MCF 10A (cell line): ENCODE measurements at regions of chr9 and their contacts with region 1.

Region 1: DNA sequence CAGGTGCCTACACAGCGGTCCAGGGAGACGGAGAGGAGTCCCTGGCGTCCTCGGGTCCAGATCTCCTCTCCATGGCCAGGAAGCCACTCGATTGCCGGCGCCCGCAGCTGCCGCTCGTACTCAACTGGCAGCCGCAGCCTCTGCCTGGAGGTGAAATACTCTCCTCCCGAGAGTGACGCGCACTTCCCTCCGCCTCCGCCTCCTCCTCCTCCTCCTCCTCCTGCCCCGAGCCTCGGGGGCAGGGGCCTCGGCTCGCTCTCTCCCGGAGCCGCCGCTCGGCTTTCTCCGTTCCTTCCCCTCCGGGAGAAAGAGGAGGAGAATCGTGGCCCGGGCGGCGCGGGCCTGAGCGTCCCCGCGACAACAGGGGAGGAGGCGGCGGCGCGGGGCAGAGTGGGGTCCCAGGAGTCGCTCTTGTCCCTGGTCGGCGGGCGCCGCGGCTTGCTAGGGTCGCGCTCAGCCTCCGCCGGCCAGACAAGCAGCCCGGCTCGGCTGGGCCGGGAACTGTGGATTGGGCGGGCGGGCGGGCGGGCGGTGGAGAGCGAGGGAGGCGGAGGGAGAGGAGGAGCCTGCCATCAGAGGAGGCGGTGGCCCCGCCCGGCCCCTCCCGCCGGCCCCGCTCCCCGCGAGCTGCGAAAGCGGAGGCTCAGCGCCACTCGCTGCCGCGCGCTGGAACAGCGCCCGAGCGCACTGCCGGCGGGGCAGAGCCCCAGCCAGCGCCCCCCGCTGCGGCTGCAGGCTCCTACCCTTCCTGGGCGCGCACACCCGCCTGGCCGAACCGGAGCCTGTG is at the start of gene CEMIP2:
- DNase-seq: peak; percentile 93
- H3K4me3 Mint-ChIP-seq: peak within 1 kb of the TSS; percentile 92
- H3K27ac Mint-ChIP-seq: peak within 1 kb of the TSS; percentile 75
- H3K4me1 Mint-ChIP-seq: peaks cover 42% of the 10 kb centered on the region
- H3K27me3 Mint-ChIP-seq: no peaks in the 10 kb centered on the region
- CTCF ChIP-seq: peak; percentile 41
- total RNA-seq, gene CEMIP2: 13.7 and 17.7 TPM in 2 replicates

Region 2: GRCh38 chr9:71506821-71507220 is 261.8 kb before region 1 on chr9:
- CTCF ChIA-PET with region 1: interaction called, 11 read pairs
- POLR2A ChIA-PET with region 1: interaction called, 3 read pairs
- intact Hi-C with region 1: no loop called
- DNase-seq: peak; percentile 89
- H3K4me3 Mint-ChIP-seq: peak overlapping the region; percentile 9
- H3K27ac Mint-ChIP-seq: peak overlapping the region; percentile 74
- H3K4me1 Mint-ChIP-seq: peaks cover 20% of the 10 kb centered on the region
- H3K27me3 Mint-ChIP-seq: no peaks in the 10 kb centered on the region
- CTCF ChIP-seq: no peak

Region 3: DNA sequence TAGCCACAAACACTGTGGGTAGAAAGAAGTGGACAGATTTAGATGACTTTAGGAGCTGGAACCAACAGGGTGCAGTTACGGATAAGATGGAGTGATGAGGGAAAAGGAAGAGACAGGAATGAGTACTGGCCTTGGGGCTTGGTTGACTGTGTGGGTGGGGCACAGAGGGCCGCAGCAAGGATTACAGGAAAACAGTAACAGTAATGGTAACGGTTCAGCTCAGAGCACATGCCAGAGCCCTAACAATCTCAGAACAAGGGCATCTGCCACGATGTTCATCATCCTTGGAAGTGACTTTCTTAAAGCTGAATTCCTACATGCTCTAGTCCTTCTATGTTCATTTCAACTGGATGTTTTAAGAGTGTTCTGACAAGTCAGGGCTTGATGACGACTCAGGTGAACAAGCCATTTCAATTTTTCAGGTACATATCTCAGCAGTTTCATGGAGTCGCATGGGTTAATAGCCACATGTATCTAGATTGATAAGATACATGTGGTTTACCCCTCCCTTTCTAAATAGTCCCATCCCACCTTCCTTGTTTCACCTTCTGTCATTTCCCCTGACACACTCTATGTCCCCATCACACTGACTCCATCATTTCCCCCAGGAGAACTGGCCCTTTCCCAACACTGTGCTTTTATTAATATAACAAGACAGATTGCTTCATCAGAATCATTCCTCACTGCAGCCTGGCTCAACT is 65.3 kb before region 1 on chr9:
- CTCF ChIA-PET with region 1: interaction called, 5 read pairs
- POLR2A ChIA-PET with region 1: interaction called, 12 read pairs
- intact Hi-C with region 1: no loop called
- DNase-seq: peak; percentile 76
- H3K4me3 Mint-ChIP-seq: no peak overlapping the region
- H3K27ac Mint-ChIP-seq: peak overlapping the region; percentile 20
- H3K4me1 Mint-ChIP-seq: peaks cover 17% of the 10 kb centered on the region
- H3K27me3 Mint-ChIP-seq: no peaks in the 10 kb centered on the region
- CTCF ChIP-seq: no peak

Region 4: GRCh38 chr9:71725590-71726338 is 42.8 kb before region 1 on chr9:
- CTCF ChIA-PET with region 1: interaction called, 7 read pairs
- POLR2A ChIA-PET with region 1: interaction called, 13 read pairs
- intact Hi-C with region 1: loop called (anchors 2 kb)
- DNase-seq: peak; percentile 94
- H3K4me3 Mint-ChIP-seq: no peak overlapping the region
- H3K27ac Mint-ChIP-seq: peak overlapping the region; percentile 66
- H3K4me1 Mint-ChIP-seq: peaks cover 17% of the 10 kb centered on the region
- H3K27me3 Mint-ChIP-seq: no peaks in the 10 kb centered on the region
- CTCF ChIP-seq: no peak

Region 5: GRCh38 chr9:72041775-72042194 is 273.2 kb after region 1 on chr9:
- CTCF ChIA-PET with region 1: no interaction called
- POLR2A ChIA-PET with region 1: no interaction called
- intact Hi-C with region 1: no loop called
- DNase-seq: peak; percentile 96
- H3K4me3 Mint-ChIP-seq: peak overlapping the region; percentile 7
- H3K27ac Mint-ChIP-seq: peak overlapping the region; percentile 33
- H3K4me1 Mint-ChIP-seq: peaks cover 12% of the 10 kb centered on the region
- H3K27me3 Mint-ChIP-seq: no peaks in the 10 kb centered on the region
- CTCF ChIP-seq: no peak